ENCODE measurements at regions of chr14 and their contacts with region 1.

Region 1: GRCh38 chr14:105065280-105066228 is at the start of gene GPR132:
- DNase-seq: peak; percentile 66
- ATAC-seq: peak; percentile 73
- H3K4me3 Mint-ChIP-seq: peak within 1 kb of the TSS; percentile 90
- H3K27ac Mint-ChIP-seq: peak within 1 kb of the TSS; percentile 89
- H3K4me1 Mint-ChIP-seq: peaks cover 88% of the 10 kb centered on the region
- H3K27me3 Mint-ChIP-seq: no peaks in the 10 kb centered on the region
- CTCF ChIP-seq: no peak
- total RNA-seq, gene GPR132: 43.4 and 48.5 TPM in 2 replicates

Region 2: GRCh38 chr14:104864241-104865080 is 201.1 kb before region 1 on chr14:
- CTCF ChIA-PET with region 1: no interaction called
- POLR2A ChIA-PET with region 1: no interaction called
- intact Hi-C with region 1: no loop called
- DNase-seq: peak; percentile 29
- ATAC-seq: peak; percentile 5
- H3K4me3 Mint-ChIP-seq: peak overlapping the region; percentile 50
- H3K27ac Mint-ChIP-seq: no peak overlapping the region
- H3K4me1 Mint-ChIP-seq: no peaks in the 10 kb centered on the region
- H3K27me3 Mint-ChIP-seq: peaks cover 30% of the 10 kb centered on the region
- CTCF ChIP-seq: no peak

Region 3: GRCh38 chr14:104985675-104986525 is 79.7 kb before region 1 on chr14 and contains the start of gene CLBA1:
- CTCF ChIA-PET with region 1: no interaction called
- POLR2A ChIA-PET with region 1: interaction called, 17 read pairs
- intact Hi-C with region 1: no loop called
- DNase-seq: peak; percentile 88
- ATAC-seq: peak; percentile 92
- H3K4me3 Mint-ChIP-seq: peak within 1 kb of the TSS; percentile 72
- H3K27ac Mint-ChIP-seq: peak within 1 kb of the TSS; percentile 71
- H3K4me1 Mint-ChIP-seq: peaks cover 11% of the 10 kb centered on the region
- H3K27me3 Mint-ChIP-seq: peaks cover 5% of the 10 kb centered on the region
- CTCF ChIP-seq: no peak
- total RNA-seq, gene CLBA1: 2.7 and 3.9 TPM in 2 replicates

Region 4: GRCh38 chr14:105020815-105021655 is 44.5 kb before region 1 on chr14 and contains the start of gene CDCA4:
- CTCF ChIA-PET with region 1: no interaction called
- POLR2A ChIA-PET with region 1: interaction called, 27 read pairs
- intact Hi-C with region 1: loop called (anchors 2 kb)
- DNase-seq: peak; percentile 97
- ATAC-seq: peak; percentile 84
- H3K4me3 Mint-ChIP-seq: peak within 1 kb of the TSS; percentile 92
- H3K27ac Mint-ChIP-seq: peak within 1 kb of the TSS; percentile 94
- H3K4me1 Mint-ChIP-seq: peaks cover 62% of the 10 kb centered on the region
- H3K27me3 Mint-ChIP-seq: no peaks in the 10 kb centered on the region
- CTCF ChIP-seq: no peak
- total RNA-seq, gene CDCA4: 11.7 and 13.6 TPM in 2 replicates

Region 5: GRCh38 chr14:105026803-105027563 is 38.6 kb before region 1 on chr14:
- CTCF ChIA-PET with region 1: no interaction called
- POLR2A ChIA-PET with region 1: interaction called, 12 read pairs
- intact Hi-C with region 1: no loop called
- DNase-seq: no peak
- ATAC-seq: no peak
- H3K4me3 Mint-ChIP-seq: no peak overlapping the region
- H3K27ac Mint-ChIP-seq: no peak overlapping the region
- H3K4me1 Mint-ChIP-seq: peaks cover 32% of the 10 kb centered on the region
- H3K27me3 Mint-ChIP-seq: no peaks in the 10 kb centered on the region
- CTCF ChIP-seq: no peak

Region 6: GRCh38 chr14:105075379-105076295 is 10.1 kb after region 1 on chr14:
- CTCF ChIA-PET with region 1: interaction called, 3 read pairs
- POLR2A ChIA-PET with region 1: interaction called, 38 read pairs
- intact Hi-C with region 1: loop called (anchors 1 kb)
- DNase-seq: peak; percentile 40
- ATAC-seq: peak; percentile 62
- H3K4me3 Mint-ChIP-seq: no peak overlapping the region
- H3K27ac Mint-ChIP-seq: no peak overlapping the region
- H3K4me1 Mint-ChIP-seq: peaks cover 48% of the 10 kb centered on the region
- H3K27me3 Mint-ChIP-seq: no peaks in the 10 kb centered on the region
- CTCF ChIP-seq: no peak